ENCODE measurements at regions of chr12 and their contacts with region 1.

Region 1: GRCh38 chr12:45268672-45269411 is 52.9 kb downstream of the ANO6 start:
- DNase-seq: peak; percentile 95
- H3K4me3 ChIP-seq: peak overlapping the region; percentile 3
- H3K27ac ChIP-seq: no peak overlapping the region
- H3K4me1 ChIP-seq: peaks cover 36% of the 10 kb centered on the region
- H3K27me3 ChIP-seq: no peaks in the 10 kb centered on the region
- CTCF ChIP-seq: peak; percentile 63

Region 2: DNA sequence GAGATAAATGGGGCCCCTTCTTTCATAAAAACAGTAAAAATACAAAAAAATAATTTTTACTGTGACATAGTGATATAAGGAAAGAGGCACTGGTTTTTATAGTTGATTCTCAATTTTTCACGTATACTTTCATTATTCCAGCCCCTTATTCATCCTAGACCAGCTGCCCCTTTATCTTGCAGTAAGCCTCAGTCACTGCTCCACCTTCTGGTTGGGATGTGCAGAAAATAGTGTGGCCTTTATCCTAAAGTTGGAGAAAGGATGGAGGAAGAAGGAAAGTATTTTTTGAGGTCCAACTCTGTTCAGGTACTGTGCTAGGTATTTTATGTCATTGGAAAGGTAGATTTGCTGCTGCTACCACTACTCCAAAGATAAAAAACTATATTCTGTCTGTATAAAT is 119.7 kb after region 1 on chr12:
- CTCF ChIA-PET with region 1: interaction called, 5 read pairs
- POLR2A ChIA-PET with region 1: no interaction called
- intact Hi-C with region 1: loop called (anchors 5 kb)
- DNase-seq: peak; percentile 64
- H3K4me3 ChIP-seq: no peak overlapping the region
- H3K27ac ChIP-seq: no peak overlapping the region
- H3K4me1 ChIP-seq: no peaks in the 10 kb centered on the region
- H3K27me3 ChIP-seq: no peaks in the 10 kb centered on the region
- CTCF ChIP-seq: peak; percentile 73

Region 3: DNA sequence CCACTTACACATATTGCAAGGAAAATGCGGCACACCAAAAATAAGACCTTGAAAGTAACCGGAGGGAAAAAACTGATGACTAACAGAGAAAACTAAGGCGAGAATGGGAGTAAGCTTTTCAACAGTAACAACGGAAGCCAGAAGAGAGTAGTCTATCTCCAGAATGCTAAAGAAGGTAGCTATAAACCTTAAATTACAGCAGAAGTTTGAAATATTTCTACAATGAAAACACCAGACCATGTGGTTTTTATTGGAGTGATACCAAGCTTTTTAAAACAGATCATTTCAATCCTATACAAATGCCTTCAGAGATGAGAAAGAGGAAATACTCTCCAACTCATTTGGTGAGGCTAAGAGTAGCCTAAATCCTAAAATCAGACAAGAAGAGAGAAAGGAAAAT is 156.6 kb after region 1 on chr12:
- CTCF ChIA-PET with region 1: no interaction called
- POLR2A ChIA-PET with region 1: no interaction called
- intact Hi-C with region 1: no loop called
- DNase-seq: no peak
- H3K4me3 ChIP-seq: no peak overlapping the region
- H3K27ac ChIP-seq: no peak overlapping the region
- H3K4me1 ChIP-seq: no peaks in the 10 kb centered on the region
- H3K27me3 ChIP-seq: no peaks in the 10 kb centered on the region
- CTCF ChIP-seq: no peak

Measured in A673 (cell line).